Panc1 (cell line): ENCODE measurements at regions of chr1 and their contacts with region 1.

Region 1: DNA sequence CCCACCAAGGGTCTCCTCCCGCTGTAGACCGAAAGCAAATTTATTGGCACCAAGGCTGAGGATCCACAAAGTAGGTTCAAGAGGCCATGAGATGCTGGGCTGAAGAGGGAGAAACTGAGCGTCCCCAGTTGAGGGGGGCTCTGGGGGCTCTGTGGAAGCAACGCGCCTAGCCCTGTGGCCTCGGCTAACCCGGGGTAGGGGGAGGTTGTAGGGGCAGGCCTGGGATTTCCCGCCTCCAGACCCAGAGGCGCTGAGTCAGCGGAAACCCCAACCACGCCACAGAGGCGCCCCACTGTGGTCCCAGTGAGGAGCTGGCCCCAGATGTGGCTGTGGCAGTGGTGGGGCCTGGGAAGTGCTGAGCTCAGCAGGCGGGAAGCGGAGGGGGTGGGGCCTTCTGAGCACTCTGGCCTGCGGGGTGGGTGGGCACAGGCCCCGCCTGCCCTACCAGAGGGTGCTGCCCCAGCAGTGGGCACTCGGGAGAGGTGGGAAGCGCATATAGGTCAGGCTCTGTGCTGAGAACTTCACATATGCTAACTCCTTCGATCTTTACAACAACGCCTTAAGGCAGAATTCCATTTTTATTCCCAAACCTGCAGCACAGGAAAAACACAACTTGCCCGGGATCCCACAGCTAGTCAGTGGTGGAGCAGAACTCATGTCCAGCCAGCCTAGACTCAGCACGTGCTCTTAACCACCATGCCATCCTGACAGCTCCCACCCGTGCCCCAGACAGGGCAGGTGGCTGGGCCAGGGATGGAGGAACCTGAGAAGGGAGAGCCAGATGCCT is 1.5 kb upstream of the COL16A1 start:
- DNase-seq: no peak
- ATAC-seq: peak; percentile 50
- H3K4me3 ChIP-seq: 0 out of 4 replicates have a peak overlapping the region, but pooled peaks of 1 of the 2 experiments have one; percentile 2
- H3K27ac ChIP-seq: peak overlapping the region; percentile 74
- H3K4me1 ChIP-seq: peaks cover 43% of the 10 kb centered on the region
- H3K27me3 ChIP-seq: no peaks in the 10 kb centered on the region
- CTCF ChIP-seq: no peak

Region 2: DNA sequence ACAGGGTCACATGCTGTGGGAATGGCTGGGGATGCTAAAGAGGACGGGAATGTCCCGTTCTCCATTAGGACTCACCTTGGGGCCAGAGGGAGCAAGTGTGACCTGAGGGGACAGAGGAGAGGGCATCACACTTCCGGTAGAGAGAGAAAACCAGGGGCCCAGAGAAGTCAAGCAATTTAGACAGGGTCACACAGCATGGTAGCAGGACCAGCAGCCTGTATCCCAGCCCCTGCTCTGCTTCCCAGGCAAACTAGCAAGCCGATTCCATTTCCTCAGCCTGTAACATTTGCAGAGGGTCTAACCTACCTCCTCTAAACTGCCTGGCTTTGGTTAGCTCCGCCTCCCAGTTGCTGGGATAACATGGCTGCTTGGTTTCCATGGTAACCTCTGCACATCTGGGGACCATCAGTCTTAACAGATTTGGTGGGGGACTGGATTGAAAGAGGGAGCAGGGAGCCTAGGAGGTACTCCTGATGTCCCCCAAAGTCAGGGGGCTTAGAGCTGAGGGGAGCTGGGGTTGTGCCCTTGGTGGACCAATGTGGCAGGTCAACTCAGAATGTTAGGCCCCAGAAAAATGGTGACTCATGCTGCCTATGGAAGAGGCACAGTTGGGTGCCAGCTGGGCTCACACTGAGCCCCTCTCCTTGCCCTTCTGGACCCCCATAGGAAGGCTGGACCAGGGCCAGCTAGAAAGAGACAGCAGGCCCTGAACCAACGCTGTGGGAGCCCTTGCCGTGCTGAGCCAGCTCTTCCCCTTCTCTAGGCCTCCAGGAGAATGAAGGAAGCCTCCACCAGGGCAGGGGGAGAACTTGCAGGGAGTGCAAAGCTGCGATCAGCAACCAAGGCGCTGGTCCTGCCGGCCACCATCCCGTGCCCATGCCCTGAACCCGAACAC is 11.0 kb before region 1 on chr1:
- CTCF ChIA-PET with region 1: interaction called, 12 read pairs
- POLR2A ChIA-PET with region 1: no interaction called
- in situ Hi-C with region 1: no loop called
- intact Hi-C with region 1: no loop called
- DNase-seq: no peak
- ATAC-seq: no peak
- H3K4me3 ChIP-seq: no peak overlapping the region
- H3K27ac ChIP-seq: no peak overlapping the region
- H3K4me1 ChIP-seq: peaks cover 29% of the 10 kb centered on the region
- H3K27me3 ChIP-seq: no peaks in the 10 kb centered on the region
- CTCF ChIP-seq: no peak

Region 3: DNA sequence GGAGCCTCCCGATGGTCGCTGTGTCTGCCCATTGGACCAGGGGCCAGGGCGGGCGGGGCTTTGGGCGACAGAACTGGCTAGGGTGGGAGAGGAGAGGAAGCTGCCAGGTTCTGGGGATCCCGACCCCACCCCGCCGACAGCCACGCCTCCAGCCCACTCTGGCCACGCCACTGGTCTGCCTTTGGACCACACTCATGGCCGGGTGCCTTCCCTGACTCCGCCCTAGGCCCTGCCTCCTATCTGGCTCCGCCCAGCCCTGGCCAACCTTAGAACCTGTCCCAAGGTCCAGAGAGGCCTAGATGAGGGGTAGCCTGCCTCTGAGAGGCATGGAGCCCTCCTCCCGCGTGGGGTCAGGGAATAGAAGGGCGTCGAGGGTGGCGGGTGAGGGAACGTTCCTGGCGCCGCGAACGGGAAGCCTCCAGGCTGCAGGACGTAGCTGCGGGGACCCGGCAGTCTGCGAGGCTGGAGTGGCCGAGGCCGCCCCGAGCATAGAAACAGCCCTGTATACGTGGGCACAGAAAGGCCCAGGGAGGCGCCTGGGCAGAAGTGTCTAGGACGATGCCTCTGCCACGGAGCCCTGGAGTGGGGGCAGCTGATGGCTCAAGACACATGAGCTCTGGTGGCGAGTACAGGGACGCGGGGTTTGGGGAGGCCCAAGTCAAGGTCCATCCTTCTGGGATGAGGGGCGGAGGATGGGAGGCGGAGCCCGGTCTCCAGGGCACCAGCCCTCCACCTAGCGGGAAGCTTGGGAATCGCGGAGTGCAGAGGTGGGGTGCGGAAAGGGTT is 10.0 kb after region 1 on chr1:
- CTCF ChIA-PET with region 1: interaction called, 13 read pairs
- POLR2A ChIA-PET with region 1: interaction called, 4 read pairs
- in situ Hi-C with region 1: no loop called
- intact Hi-C with region 1: no loop called
- DNase-seq: peak; percentile 87
- ATAC-seq: peak; percentile 96
- H3K4me3 ChIP-seq: peak overlapping the region; percentile 55 to 78
- H3K27ac ChIP-seq: peak overlapping the region; percentile 86
- H3K4me1 ChIP-seq: peaks cover 44% of the 10 kb centered on the region
- H3K27me3 ChIP-seq: no peaks in the 10 kb centered on the region
- CTCF ChIP-seq: peak; percentile 96